Naive thymus-derived CD4-positive, alpha-beta T cell (primary cell): ENCODE measurements at regions of chr7 and their contacts with region 1.

Region 1: DNA sequence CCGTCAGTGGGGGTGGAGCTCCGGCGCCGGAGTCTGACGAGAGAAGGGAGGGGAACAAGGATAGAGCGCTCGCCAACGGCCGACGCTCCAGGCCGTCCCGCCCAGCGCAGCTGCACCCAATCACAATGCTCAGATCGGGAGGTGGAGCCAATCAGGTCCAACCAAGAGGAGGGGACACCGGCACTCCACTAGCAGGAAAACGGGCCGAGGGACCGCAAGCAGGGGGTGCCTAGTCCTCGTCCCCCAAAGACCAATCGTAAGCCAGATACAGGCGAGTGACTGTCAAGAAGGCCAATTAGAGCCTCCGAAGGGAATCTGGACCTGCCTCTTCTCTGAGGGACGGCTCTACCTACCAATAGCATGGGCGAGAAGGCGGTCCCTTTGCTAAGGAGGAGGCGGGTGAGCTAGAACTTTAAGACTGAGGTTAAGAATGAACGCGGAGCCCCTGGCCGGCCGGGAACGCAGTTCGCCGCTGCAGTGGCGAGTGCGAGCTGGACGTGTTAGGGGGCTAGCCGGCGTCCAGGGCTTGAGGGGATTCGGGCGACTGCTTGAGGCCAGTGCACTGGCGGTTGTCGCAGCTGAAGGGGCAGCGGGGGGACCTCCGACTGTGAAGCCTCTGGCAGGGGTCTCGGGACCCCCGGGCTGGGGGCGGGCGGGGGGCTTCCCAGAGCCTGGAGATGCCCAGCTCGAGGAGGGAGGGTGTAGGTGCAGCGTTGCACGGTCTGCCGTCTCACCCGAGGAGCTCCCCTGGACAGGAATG is at the start of gene FBXO24:
- DNase-seq: peak; percentile 91 to 100 (median 99)
- ATAC-seq: peak; percentile 91
- H3K4me3 ChIP-seq: peak within 1 kb of the TSS; percentile 94
- H3K4me3 Mint-ChIP-seq: peak within 1 kb of the TSS; percentile 95 to 100 (median 99)
- H3K27ac ChIP-seq: peak within 1 kb of the TSS; percentile 90
- H3K27ac Mint-ChIP-seq: peak within 1 kb of the TSS in 8 of 9 donors; percentile 94 to 99 (median 98)
- H3K4me1 ChIP-seq: peaks cover 22 to 28% of the 10 kb centered on the region in 2 donors
- H3K4me1 Mint-ChIP-seq: peaks cover 20 to 42% (median 30%) of the 10 kb centered on the region in 7 donors
- H3K27me3 ChIP-seq: no peaks in the 10 kb centered on the region
- H3K27me3 Mint-ChIP-seq: peaks cover 0 to 22% (median 4%) of the 10 kb centered on the region in 5 donors
- total RNA-seq, gene FBXO24: 0.75 to 3.1 (median 1.7) TPM

Region 2: GRCh38 chr7:100435401-100436304 is 150.8 kb before region 1 on chr7:
- CTCF ChIA-PET with region 1: no interaction called
- POLR2A ChIA-PET with region 1: interaction called, 54 read pairs
- intact Hi-C with region 1: loop called (anchors 1 kb)
- DNase-seq: peak in 7 of 9 donors; percentile 44 to 57 (median 55)
- ATAC-seq: peak; percentile 26
- H3K4me3 ChIP-seq: peak overlapping the region; percentile 89
- H3K4me3 Mint-ChIP-seq: peak overlapping the region; percentile 86 to 100 (median 95)
- H3K27ac ChIP-seq: peak overlapping the region; percentile 98
- H3K27ac Mint-ChIP-seq: peak overlapping the region; percentile 88 to 99 (median 97)
- H3K4me1 ChIP-seq: peaks cover 22 to 36% of the 10 kb centered on the region in 2 donors
- H3K4me1 Mint-ChIP-seq: peaks cover 30 to 52% (median 43%) of the 10 kb centered on the region in 7 donors
- H3K27me3 ChIP-seq: no peaks in the 10 kb centered on the region
- H3K27me3 Mint-ChIP-seq: peaks cover 0 to 4% (median 0%) of the 10 kb centered on the region in 5 donors

Region 3: GRCh38 chr7:100545360-100546128 is 40.9 kb before region 1 on chr7:
- CTCF ChIA-PET with region 1: interaction called, 4 read pairs
- POLR2A ChIA-PET with region 1: interaction called, 18 read pairs
- intact Hi-C with region 1: no loop called
- DNase-seq: peak in 2 of 9 donors; percentile 34 to 60
- ATAC-seq: peak; percentile 55
- H3K4me3 ChIP-seq: peak overlapping the region; percentile 7
- H3K4me3 Mint-ChIP-seq: peak overlapping the region; percentile 45 to 82 (median 68)
- H3K27ac ChIP-seq: peak overlapping the region; percentile 56
- H3K27ac Mint-ChIP-seq: peak overlapping the region; percentile 77 to 95 (median 88)
- H3K4me1 ChIP-seq: peaks cover 69 to 91% of the 10 kb centered on the region in 2 donors
- H3K4me1 Mint-ChIP-seq: peaks cover 74 to 100% (median 92%) of the 10 kb centered on the region in 7 donors
- H3K27me3 ChIP-seq: no peaks in the 10 kb centered on the region
- H3K27me3 Mint-ChIP-seq: no peaks in the 10 kb centered on the region

Region 4: DNA sequence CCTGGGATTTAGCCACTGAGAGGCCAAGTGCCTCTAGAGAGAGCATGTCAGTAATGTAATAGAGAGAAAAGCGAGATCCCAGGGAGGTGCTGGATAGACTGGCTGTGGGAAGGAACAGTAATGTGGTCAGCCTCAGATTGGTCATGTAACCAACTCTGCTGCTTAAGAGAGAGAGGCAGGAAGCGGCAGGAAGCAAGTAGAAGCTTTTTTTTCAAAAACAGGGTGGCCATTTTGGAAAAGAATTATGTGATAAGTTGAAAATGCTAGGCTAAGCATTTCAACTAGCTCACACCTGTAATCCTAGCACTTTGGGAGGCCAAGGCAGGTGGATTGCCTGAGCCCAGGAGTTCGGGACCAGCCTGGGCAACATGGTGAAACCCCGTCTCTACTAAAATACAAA is 12.0 kb after region 1 on chr7:
- CTCF ChIA-PET with region 1: interaction called, 3 read pairs
- POLR2A ChIA-PET with region 1: interaction called, 29 read pairs
- intact Hi-C with region 1: no loop called
- DNase-seq: no peak
- ATAC-seq: no peak
- H3K4me3 ChIP-seq: no peak overlapping the region
- H3K4me3 Mint-ChIP-seq: no peak overlapping the region
- H3K27ac ChIP-seq: no peak overlapping the region
- H3K27ac Mint-ChIP-seq: peak overlapping the region in 2 of 9 donors; percentile 2 to 37
- H3K4me1 ChIP-seq: peaks cover 0 to 1% of the 10 kb centered on the region in 2 donors
- H3K4me1 Mint-ChIP-seq: peaks cover 0 to 12% (median 6%) of the 10 kb centered on the region in 7 donors
- H3K27me3 ChIP-seq: no peaks in the 10 kb centered on the region
- H3K27me3 Mint-ChIP-seq: peaks cover 0 to 2% (median 0%) of the 10 kb centered on the region in 5 donors

Region 5: GRCh38 chr7:100632951-100633717 is 46.7 kb after region 1 on chr7:
- CTCF ChIA-PET with region 1: interaction called, 3 read pairs
- POLR2A ChIA-PET with region 1: interaction called, 4 read pairs
- intact Hi-C with region 1: loop called in 1 of 2 experiments (anchors 1 kb)
- DNase-seq: peak in 8 of 9 donors; percentile 39 to 72 (median 45)
- ATAC-seq: peak; percentile 79
- H3K4me3 ChIP-seq: peak overlapping the region; percentile 68
- H3K4me3 Mint-ChIP-seq: peak overlapping the region; percentile 79 to 89 (median 84)
- H3K27ac ChIP-seq: peak overlapping the region; percentile 56
- H3K27ac Mint-ChIP-seq: peak overlapping the region in 7 of 9 donors; percentile 40 to 92 (median 63)
- H3K4me1 ChIP-seq: no peaks in the 10 kb centered on the region
- H3K4me1 Mint-ChIP-seq: peaks cover 10 to 42% (median 25%) of the 10 kb centered on the region in 7 donors
- H3K27me3 ChIP-seq: no peaks in the 10 kb centered on the region
- H3K27me3 Mint-ChIP-seq: peaks cover 0 to 4% (median 0%) of the 10 kb centered on the region in 5 donors

Region 6: GRCh38 chr7:100705753-100706671 is 119.6 kb after region 1 on chr7 and contains the start of gene POP7:
- CTCF ChIA-PET with region 1: interaction called, 6 read pairs
- POLR2A ChIA-PET with region 1: interaction called, 24 read pairs
- intact Hi-C with region 1: loop called in 1 of 2 experiments (anchors 1 kb)
- DNase-seq: peak; percentile 95 to 99 (median 97)
- ATAC-seq: peak; percentile 97
- H3K4me3 ChIP-seq: peak within 1 kb of the TSS; percentile 85
- H3K4me3 Mint-ChIP-seq: peak within 1 kb of the TSS; percentile 88 to 97 (median 95)
- H3K27ac ChIP-seq: peak within 1 kb of the TSS; percentile 91
- H3K27ac Mint-ChIP-seq: peak within 1 kb of the TSS; percentile 88 to 96 (median 93)
- H3K4me1 ChIP-seq: peaks cover 9 to 12% of the 10 kb centered on the region in 2 donors
- H3K4me1 Mint-ChIP-seq: peaks cover 8 to 15% (median 13%) of the 10 kb centered on the region in 7 donors
- H3K27me3 ChIP-seq: no peaks in the 10 kb centered on the region
- H3K27me3 Mint-ChIP-seq: peaks cover 0 to 13% (median 3%) of the 10 kb centered on the region in 5 donors
- total RNA-seq, gene POP7: 8.9 to 38.2 (median 15.0) TPM

Region 7: DNA sequence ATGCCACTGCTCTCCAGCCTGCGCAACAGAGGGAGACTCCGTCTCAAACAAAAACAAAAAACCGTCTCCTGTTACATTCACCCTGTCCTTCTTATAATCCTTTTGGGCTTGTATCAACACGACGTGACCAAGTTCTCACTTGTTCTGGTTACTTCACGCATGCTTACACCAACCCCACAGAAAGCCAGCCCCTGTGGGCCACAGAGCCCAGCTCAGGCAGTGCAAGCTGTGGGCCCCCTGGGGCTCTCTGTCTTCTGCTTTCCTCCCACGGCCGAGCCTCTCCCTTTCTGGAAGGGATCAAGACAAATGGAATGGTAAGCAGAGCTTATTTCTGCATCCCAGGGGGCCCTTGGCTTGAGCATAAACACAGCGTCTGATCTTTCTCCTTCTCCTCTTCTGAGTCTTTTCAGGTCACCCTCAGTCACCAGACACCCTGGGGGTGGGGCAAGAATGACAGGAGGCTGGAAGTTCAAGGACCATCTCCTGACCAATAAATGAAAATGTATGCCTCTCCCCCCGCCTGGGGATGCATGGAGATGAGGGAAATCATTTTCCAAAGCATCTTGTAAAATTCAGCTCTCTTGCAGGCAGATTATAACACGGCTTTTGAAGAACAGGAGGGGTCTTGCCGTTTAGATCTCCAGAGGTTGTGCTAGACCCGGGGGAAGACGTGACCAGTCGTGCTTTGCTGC is 479.8 kb after region 1 on chr7:
- CTCF ChIA-PET with region 1: no interaction called
- POLR2A ChIA-PET with region 1: no interaction called
- intact Hi-C with region 1: no loop called
- DNase-seq: no peak
- ATAC-seq: no peak
- H3K4me3 ChIP-seq: no peak overlapping the region
- H3K4me3 Mint-ChIP-seq: no peak overlapping the region
- H3K27ac ChIP-seq: no peak overlapping the region
- H3K27ac Mint-ChIP-seq: no peak overlapping the region
- H3K4me1 ChIP-seq: no peaks in the 10 kb centered on the region
- H3K4me1 Mint-ChIP-seq: no peaks in the 10 kb centered on the region
- H3K27me3 ChIP-seq: no peaks in the 10 kb centered on the region
- H3K27me3 Mint-ChIP-seq: peaks cover 15 to 55% (median 40%) of the 10 kb centered on the region in 5 donors